ENCODE measurements at regions of chrX and their contacts with region 1.

Region 1: DNA sequence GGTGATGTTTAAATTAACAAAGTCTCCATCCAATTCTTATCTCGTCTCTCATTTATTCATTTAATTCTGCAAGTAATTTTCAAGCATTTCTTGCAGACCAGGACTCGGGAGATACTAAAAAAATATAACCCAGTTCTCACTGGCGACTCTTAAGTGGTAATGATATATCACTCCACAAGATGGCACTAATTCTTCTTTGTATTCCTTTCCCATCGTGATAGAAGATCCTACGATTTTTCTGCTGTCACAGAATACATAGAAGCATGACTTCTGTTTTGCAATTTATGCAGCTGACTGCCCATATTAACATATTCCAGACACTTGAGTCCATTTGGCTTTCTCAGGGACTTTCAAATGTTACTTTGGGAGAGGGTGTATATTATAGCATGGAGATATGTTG is 64.0 kb upstream of the FGF13 start:
- DNase-seq: peak; percentile 74
- ATAC-seq: peak; percentile 76
- H3K4me3 ChIP-seq: no peak overlapping the region
- H3K27ac ChIP-seq: no peak overlapping the region
- H3K4me1 ChIP-seq: peaks cover 17% of the 10 kb centered on the region
- H3K27me3 ChIP-seq: no peaks in the 10 kb centered on the region
- CTCF ChIP-seq: peak; percentile 67

Region 2: GRCh38 chrX:138723301-138723700 is 52.2 kb before region 1 on chrX:
- CTCF ChIA-PET with region 1: no interaction called
- POLR2A ChIA-PET with region 1: no interaction called
- intact Hi-C with region 1: no loop called
- DNase-seq: no peak
- ATAC-seq: no peak
- H3K4me3 ChIP-seq: no peak overlapping the region
- H3K27ac ChIP-seq: no peak overlapping the region
- H3K4me1 ChIP-seq: no peaks in the 10 kb centered on the region
- H3K27me3 ChIP-seq: peaks cover 31% of the 10 kb centered on the region; the same call in 1 of the 2 replicates
- CTCF ChIP-seq: no peak

Region 3: GRCh38 chrX:138886769-138887168 is 111.3 kb after region 1 on chrX:
- CTCF ChIA-PET with region 1: no interaction called
- POLR2A ChIA-PET with region 1: interaction called, 11 read pairs
- intact Hi-C with region 1: no loop called
- DNase-seq: peak; percentile 94
- ATAC-seq: peak; percentile 85
- H3K4me3 ChIP-seq: no peak overlapping the region
- H3K27ac ChIP-seq: peak overlapping the region; percentile 89
- H3K4me1 ChIP-seq: peaks cover 29% of the 10 kb centered on the region
- H3K27me3 ChIP-seq: no peaks in the 10 kb centered on the region
- CTCF ChIP-seq: no peak

Region 4: GRCh38 chrX:139126493-139126892 is 351.0 kb after region 1 on chrX:
- CTCF ChIA-PET with region 1: no interaction called
- POLR2A ChIA-PET with region 1: no interaction called
- intact Hi-C with region 1: loop called (anchors 10 kb)
- DNase-seq: peak; percentile 80
- ATAC-seq: peak; percentile 64; the same call in 1 of the 2 replicates
- H3K4me3 ChIP-seq: no peak overlapping the region
- H3K27ac ChIP-seq: no peak overlapping the region
- H3K4me1 ChIP-seq: peaks cover 15% of the 10 kb centered on the region
- H3K27me3 ChIP-seq: no peaks in the 10 kb centered on the region
- CTCF ChIP-seq: peak; percentile 77

Region 5: GRCh38 chrX:139267851-139268250 is 492.3 kb after region 1 on chrX:
- CTCF ChIA-PET with region 1: no interaction called
- POLR2A ChIA-PET with region 1: no interaction called
- intact Hi-C with region 1: no loop called
- DNase-seq: no peak
- ATAC-seq: no peak
- H3K4me3 ChIP-seq: no peak overlapping the region
- H3K27ac ChIP-seq: no peak overlapping the region
- H3K4me1 ChIP-seq: no peaks in the 10 kb centered on the region
- H3K27me3 ChIP-seq: no peaks in the 10 kb centered on the region
- CTCF ChIP-seq: no peak

Region 6: DNA sequence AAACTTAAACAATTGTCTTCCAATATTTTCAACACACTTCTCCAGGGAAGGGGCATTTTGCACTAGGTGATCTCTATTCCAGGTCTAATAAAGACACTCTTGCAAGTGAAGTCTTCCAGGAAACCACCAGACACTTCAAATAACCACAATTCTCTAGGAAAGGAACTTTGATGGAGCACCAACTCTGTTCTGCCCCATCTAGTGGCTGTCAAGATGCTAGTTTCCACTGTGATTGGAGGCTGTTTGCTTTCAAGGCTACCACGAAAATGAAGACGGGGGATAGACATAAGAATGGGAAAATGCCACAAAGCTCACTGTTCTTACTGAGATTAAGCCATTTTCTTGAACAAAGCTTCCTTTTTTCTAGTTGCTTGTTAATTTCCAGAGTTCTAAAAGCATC is 654.4 kb after region 1 on chrX:
- CTCF ChIA-PET with region 1: no interaction called
- POLR2A ChIA-PET with region 1: no interaction called
- intact Hi-C with region 1: loop called (anchors 2 kb)
- DNase-seq: peak; percentile 42
- ATAC-seq: no peak
- H3K4me3 ChIP-seq: no peak overlapping the region
- H3K27ac ChIP-seq: no peak overlapping the region
- H3K4me1 ChIP-seq: no peaks in the 10 kb centered on the region
- H3K27me3 ChIP-seq: no peaks in the 10 kb centered on the region
- CTCF ChIP-seq: peak; percentile 56

Region 7: DNA sequence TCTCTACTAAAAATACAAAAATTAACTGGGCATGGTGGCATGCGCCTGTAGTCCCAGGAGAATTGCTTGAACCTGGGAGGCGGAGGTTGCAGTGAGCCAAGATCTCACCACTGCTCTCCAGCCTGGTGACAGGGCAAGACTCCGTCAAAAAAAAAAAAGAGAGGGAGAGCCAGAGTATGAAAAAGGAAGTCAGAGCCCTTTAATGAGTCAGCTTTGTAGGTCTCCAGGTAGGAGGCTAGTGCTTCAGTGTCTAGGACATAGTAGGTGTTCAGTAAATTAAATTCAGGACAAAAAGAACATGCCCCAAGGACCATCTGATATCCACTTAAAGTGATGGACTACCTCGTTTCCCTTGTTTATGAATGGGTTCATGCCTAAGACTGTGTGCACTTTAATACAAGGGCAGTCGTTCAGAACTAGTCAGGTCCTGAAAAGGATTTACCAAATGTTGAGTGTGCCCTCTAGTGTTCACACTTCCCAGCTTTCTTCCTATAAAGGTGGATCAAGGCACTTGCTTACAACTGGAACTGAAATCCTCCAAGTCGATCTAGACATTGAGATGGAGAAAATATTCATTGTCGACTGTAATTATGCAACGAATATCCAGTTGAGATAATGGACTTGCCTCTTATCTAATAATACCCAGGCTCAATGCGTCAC is 784.0 kb after region 1 on chrX:
- CTCF ChIA-PET with region 1: no interaction called
- POLR2A ChIA-PET with region 1: no interaction called
- intact Hi-C with region 1: loop called (anchors 1 kb)
- DNase-seq: peak; percentile 78
- ATAC-seq: peak; percentile 81
- H3K4me3 ChIP-seq: no peak overlapping the region
- H3K27ac ChIP-seq: no peak overlapping the region
- H3K4me1 ChIP-seq: no peaks in the 10 kb centered on the region
- H3K27me3 ChIP-seq: peaks cover 10% of the 10 kb centered on the region
- CTCF ChIP-seq: peak; percentile 74

Region 8: DNA sequence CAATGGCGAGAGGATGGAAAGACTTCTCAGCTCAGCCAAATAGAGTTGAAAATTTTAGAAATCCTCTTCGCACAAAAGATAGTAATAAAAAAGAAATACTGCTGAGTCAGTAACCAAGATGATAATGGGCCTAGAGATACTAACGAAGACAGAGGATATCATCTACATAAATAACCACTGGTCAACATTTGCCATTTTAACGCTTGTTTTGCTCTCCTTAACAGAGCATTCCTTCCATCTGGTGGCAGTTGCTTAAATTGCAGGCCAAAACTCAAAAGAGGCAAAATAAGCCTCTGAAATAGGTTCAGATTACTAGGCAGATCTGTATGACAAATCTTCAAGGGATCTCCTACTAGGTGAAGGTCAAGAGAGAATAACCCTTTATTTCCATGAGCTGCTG is 984.1 kb after region 1 on chrX:
- CTCF ChIA-PET with region 1: no interaction called
- POLR2A ChIA-PET with region 1: no interaction called
- intact Hi-C with region 1: loop called (anchors 5 kb)
- DNase-seq: peak; percentile 56
- ATAC-seq: peak; percentile 40
- H3K4me3 ChIP-seq: no peak overlapping the region
- H3K27ac ChIP-seq: no peak overlapping the region
- H3K4me1 ChIP-seq: no peaks in the 10 kb centered on the region
- H3K27me3 ChIP-seq: no peaks in the 10 kb centered on the region
- CTCF ChIP-seq: peak; percentile 76